Right ventricle myocardium inferior (tissue), 1 donor: ENCODE measurements at regions of chr17 and their contacts with region 1.

Region 1: GRCh38 chr17:14300575-14301278 is at the start of gene HS3ST3B1:
- DNase-seq: peak; percentile 98
- ATAC-seq: peak; percentile 93
- total RNA-seq, gene HS3ST3B1: 1.5 TPM

Region 2: GRCh38 chr17:13594762-13595598 is 705.7 kb before region 1 on chr17:
- intact Hi-C with region 1: loop called (anchors 2 kb)
- DNase-seq: no peak
- ATAC-seq: peak; percentile 54

Region 3: GRCh38 chr17:13765701-13766100 is 535.0 kb before region 1 on chr17:
- intact Hi-C with region 1: loop called (anchors 5 kb)
- DNase-seq: no peak
- ATAC-seq: peak; percentile 60

Region 4: GRCh38 chr17:14069251-14070021 is 231.3 kb before region 1 on chr17 and contains the start of gene COX10:
- intact Hi-C with region 1: loop called (anchors 5 kb)
- DNase-seq: peak; percentile 93
- ATAC-seq: peak; percentile 99
- total RNA-seq, gene COX10: 43.8 TPM

Region 5: GRCh38 chr17:14580499-14580898 is 279.8 kb after region 1 on chr17:
- intact Hi-C with region 1: no loop called
- DNase-seq: no peak
- ATAC-seq: no peak

Region 6: GRCh38 chr17:15157051-15157450 is 856.3 kb after region 1 on chr17:
- intact Hi-C with region 1: loop called (anchors 10 kb)
- DNase-seq: no peak
- ATAC-seq: no peak